ENCODE measurements at regions of chr16 and their contacts with region 1.

Region 1: GRCh38 chr16:20383106-20384029 is 21.2 kb downstream of the PDILT start:
- DNase-seq: peak; percentile 7
- H3K4me3 ChIP-seq: no peak overlapping the region
- CTCF ChIP-seq: peak; percentile 72

Region 2: GRCh38 chr16:19898924-19899604 is 484.3 kb before region 1 on chr16:
- CTCF ChIA-PET with region 1: interaction called, 334 read pairs
- POLR2A ChIA-PET with region 1: no interaction called
- DNase-seq: no peak
- H3K4me3 ChIP-seq: no peak overlapping the region
- CTCF ChIP-seq: peak; percentile 66

Region 3: GRCh38 chr16:19907161-19907992 is 476.0 kb before region 1 on chr16:
- CTCF ChIA-PET with region 1: interaction called, 334 read pairs
- POLR2A ChIA-PET with region 1: no interaction called
- DNase-seq: no peak
- H3K4me3 ChIP-seq: no peak overlapping the region
- CTCF ChIP-seq: peak; percentile 100

Region 4: GRCh38 chr16:20372701-20373100 is 10.7 kb before region 1 on chr16:
- CTCF ChIA-PET with region 1: interaction called, 22 read pairs
- POLR2A ChIA-PET with region 1: no interaction called
- DNase-seq: no peak
- H3K4me3 ChIP-seq: no peak overlapping the region
- CTCF ChIP-seq: no peak

Region 5: GRCh38 chr16:20393801-20394577 is 10.6 kb after region 1 on chr16:
- CTCF ChIA-PET with region 1: interaction called, 30 read pairs
- POLR2A ChIA-PET with region 1: no interaction called
- DNase-seq: no peak
- H3K4me3 ChIP-seq: no peak overlapping the region
- CTCF ChIP-seq: no peak